AG04449 (cell line): ENCODE measurements at regions of chr2 and their contacts with region 1.

Region 1: DNA sequence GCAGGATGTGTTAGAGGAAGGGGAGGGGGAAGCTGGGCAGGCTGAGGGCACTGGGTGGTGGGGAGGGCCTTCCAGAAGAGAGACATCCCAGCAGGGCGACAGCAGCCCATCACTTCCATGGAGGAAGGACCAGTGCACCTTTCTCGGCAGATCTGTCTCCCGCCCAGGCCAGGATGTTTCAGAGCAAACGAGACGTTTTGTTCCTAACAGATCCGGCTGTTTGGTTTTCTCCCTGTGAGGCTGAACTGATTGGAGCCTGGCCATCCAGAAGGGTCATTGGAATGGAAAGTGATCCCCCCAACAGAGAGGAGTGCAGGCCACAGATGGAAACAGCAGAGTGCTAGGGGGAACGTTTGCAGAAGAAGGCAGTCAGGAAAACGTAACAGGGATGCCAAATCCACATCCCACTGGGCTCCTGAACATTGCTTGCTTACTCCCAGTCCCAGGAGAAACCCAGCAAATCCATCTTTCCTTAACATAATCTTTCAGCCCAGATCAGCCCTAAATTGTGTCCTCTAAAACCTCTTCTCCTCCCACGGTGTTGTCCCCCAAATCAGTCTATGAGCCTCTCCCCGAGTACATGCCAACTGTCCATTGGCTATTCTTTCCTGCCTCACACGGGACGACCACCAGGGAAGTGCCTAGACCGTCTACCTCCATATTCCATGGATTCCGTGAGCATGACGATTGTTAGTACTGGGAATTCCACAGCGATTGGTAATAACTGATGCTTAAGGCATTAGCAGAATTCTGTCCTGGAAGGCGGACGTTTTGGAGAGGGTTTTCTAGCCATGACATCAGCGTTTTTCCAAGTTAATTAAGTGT is 126.8 kb downstream of the SEPTIN10 start:
- DNase-seq: peak; percentile 59
- H3K4me3 ChIP-seq: no peak overlapping the region
- CTCF ChIP-seq: no peak

Region 2: DNA sequence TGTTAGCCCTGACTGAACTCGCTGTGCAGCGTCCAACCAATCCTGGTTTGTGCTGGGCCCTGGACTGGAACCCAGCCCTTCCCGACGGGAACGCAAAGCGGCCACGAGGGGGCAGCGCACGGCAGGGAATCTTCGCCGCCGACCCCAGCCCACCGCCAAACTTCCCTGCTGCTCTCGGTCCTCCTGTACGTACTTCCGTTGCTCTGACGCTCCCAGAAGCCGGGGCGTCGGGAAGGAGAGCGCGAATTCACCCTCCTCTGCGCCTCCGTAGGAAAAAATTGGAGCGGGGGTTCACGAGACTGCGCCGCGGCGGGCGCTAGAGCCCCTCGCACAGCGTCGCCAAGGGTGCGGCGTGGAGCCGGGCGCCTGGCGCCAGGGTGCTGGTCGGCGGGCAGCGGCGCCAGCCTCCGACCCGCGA is 358.9 kb before region 1 on chr2:
- CTCF ChIA-PET with region 1: interaction called, 11 read pairs
- POLR2A ChIA-PET with region 1: interaction called, 3 read pairs
- DNase-seq: peak; percentile 42
- H3K4me3 ChIP-seq: peak overlapping the region; percentile 72
- CTCF ChIP-seq: peak; percentile 98

Region 3: DNA sequence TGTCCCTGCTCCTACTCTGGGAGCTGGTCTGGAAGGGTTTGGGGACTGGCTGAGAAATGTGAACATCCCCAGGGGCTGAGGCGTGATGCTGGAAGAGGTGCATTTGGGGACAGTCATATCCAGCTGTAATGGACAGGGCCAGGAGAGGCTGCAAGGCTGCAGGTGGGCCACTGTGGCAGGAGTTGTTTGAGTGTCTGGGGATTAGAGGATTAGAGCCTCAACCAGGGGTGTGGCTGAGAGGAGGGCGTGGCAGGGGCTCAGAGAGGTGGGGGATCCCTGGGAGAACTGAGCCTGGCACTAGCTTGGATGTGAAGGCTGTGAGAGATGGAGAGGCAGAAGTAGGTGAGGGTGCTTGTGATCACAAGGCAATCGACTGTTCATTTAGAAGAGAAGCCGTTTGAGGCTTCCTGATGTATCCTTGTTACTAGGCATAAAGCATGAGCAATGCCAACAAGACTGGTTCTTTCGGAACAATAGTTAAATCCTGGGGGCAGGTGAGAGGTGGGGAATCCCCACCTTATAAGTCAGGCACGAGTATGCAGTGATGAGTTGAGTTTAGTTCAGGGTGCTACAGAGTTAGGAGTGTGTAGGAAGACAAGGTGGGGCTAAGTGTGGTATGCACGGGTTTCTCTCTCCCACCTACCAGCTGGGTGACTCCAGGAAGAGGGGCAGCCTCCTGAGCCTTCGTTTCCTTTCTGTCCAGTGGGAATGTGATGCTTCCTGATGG is 326.0 kb before region 1 on chr2:
- CTCF ChIA-PET with region 1: no interaction called
- POLR2A ChIA-PET with region 1: no interaction called
- DNase-seq: no peak
- H3K4me3 ChIP-seq: no peak overlapping the region
- CTCF ChIP-seq: no peak